GM12878 (cell line): ENCODE measurements at regions of chr10 and their contacts with region 1.

Region 1: DNA sequence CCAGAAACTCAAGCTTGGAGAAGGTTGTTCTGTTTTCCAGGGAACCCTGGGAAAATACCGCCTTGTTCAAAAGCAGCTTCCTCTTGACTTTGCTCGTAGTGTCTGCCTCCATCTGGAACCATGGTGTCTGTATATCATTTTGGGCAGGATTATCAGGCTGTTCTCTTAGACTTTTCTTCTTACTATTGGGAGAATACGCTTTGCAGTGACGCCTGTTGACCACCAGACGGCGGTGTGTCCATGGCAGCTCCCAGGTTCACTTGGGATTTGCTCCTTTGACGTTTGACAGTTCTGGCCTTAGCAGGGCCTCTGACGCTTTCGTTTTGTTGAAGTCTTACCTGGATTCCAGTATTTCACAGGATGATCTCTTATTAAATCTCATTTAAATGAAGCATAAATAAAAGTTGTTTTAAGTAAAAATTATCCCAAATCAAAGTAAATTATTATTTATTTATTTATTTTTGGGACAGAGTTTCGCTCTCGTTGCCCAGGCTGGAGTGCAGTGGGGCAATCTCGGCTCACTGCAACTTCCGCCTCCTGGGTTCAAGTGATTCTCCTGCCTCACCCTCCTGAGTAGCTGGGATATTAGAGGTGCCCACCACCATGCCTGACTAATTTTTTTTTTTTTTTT is 41.8 kb upstream of the GJD4 start:
- DNase-seq: peak; percentile 15
- ATAC-seq: peak; percentile 84
- H3K4me3 ChIP-seq: no peak overlapping the region
- H3K27ac ChIP-seq: no peak overlapping the region
- H3K4me1 ChIP-seq: peaks cover 8% of the 10 kb centered on the region
- H3K27me3 ChIP-seq: no peaks in the 10 kb centered on the region
- CTCF ChIP-seq: peak; percentile 90 to 100 (median 100)
- EP300 ChIP-seq: no peak
- POLR2A ChIP-seq: no peak
- RAD21 ChIP-seq: peak; percentile 71

Region 2: DNA sequence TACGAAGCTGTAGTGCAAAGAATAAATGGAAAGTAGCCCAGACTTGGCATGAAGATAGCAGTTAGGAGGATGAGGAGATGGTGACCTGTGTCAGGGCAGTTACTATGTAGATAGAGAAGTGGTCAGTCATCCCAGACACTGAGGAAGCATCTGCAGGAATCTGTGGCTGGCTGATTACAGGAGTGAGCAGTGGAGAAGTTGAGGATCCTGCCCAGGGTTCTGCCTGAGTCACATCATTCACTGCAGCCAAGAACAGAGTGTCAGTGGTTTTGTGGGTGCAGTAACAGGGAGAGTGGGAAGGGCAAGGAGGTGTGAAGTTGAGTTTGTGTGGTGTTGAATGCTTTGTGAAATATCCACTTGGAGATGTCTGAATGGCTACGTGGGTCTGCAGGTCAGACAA is 1552.5 kb before region 1 on chr10:
- CTCF ChIA-PET with region 1: no interaction called
- POLR2A ChIA-PET with region 1: no interaction called
- RAD21 ChIA-PET with region 1: no interaction called
- SMC1A ChIA-PET with region 1: no interaction called
- in situ Hi-C with region 1: no loop called
- intact Hi-C with region 1: no loop called
- DNase-seq: no peak
- ATAC-seq: no peak
- H3K4me3 ChIP-seq: no peak overlapping the region
- H3K27ac ChIP-seq: no peak overlapping the region
- H3K4me1 ChIP-seq: no peaks in the 10 kb centered on the region
- H3K27me3 ChIP-seq: no peaks in the 10 kb centered on the region
- CTCF ChIP-seq: no peak
- EP300 ChIP-seq: no peak
- POLR2A ChIP-seq: no peak
- RAD21 ChIP-seq: no peak

Region 3: GRCh38 chr10:35236739-35237138 is 326.6 kb before region 1 on chr10:
- CTCF ChIA-PET with region 1: interaction called, 13 read pairs
- POLR2A ChIA-PET with region 1: no interaction called
- RAD21 ChIA-PET with region 1: interaction called, 9 read pairs
- SMC1A ChIA-PET with region 1: interaction called, 7 read pairs
- in situ Hi-C with region 1: no loop called
- intact Hi-C with region 1: loop called (anchors 2 kb)
- DNase-seq: no peak
- ATAC-seq: no peak
- H3K4me3 ChIP-seq: no peak overlapping the region
- H3K27ac ChIP-seq: no peak overlapping the region
- H3K4me1 ChIP-seq: no peaks in the 10 kb centered on the region
- H3K27me3 ChIP-seq: no peaks in the 10 kb centered on the region
- CTCF ChIP-seq: peak in 2 of 3 experiments; percentile 15 to 28; a peak in 2 of 6 replicates
- EP300 ChIP-seq: no peak
- POLR2A ChIP-seq: no peak
- RAD21 ChIP-seq: peak; percentile 46

Region 4: GRCh38 chr10:35257057-35257983 is 306.1 kb before region 1 on chr10:
- CTCF ChIA-PET with region 1: no interaction called
- POLR2A ChIA-PET with region 1: no interaction called
- RAD21 ChIA-PET with region 1: no interaction called
- SMC1A ChIA-PET with region 1: no interaction called
- in situ Hi-C with region 1: no loop called
- intact Hi-C with region 1: no loop called
- DNase-seq: no peak
- ATAC-seq: no peak
- H3K4me3 ChIP-seq: no peak overlapping the region
- H3K27ac ChIP-seq: no peak overlapping the region
- H3K4me1 ChIP-seq: no peaks in the 10 kb centered on the region
- H3K27me3 ChIP-seq: no peaks in the 10 kb centered on the region
- CTCF ChIP-seq: no peak
- EP300 ChIP-seq: no peak
- POLR2A ChIP-seq: no peak
- RAD21 ChIP-seq: no peak

Region 5: DNA sequence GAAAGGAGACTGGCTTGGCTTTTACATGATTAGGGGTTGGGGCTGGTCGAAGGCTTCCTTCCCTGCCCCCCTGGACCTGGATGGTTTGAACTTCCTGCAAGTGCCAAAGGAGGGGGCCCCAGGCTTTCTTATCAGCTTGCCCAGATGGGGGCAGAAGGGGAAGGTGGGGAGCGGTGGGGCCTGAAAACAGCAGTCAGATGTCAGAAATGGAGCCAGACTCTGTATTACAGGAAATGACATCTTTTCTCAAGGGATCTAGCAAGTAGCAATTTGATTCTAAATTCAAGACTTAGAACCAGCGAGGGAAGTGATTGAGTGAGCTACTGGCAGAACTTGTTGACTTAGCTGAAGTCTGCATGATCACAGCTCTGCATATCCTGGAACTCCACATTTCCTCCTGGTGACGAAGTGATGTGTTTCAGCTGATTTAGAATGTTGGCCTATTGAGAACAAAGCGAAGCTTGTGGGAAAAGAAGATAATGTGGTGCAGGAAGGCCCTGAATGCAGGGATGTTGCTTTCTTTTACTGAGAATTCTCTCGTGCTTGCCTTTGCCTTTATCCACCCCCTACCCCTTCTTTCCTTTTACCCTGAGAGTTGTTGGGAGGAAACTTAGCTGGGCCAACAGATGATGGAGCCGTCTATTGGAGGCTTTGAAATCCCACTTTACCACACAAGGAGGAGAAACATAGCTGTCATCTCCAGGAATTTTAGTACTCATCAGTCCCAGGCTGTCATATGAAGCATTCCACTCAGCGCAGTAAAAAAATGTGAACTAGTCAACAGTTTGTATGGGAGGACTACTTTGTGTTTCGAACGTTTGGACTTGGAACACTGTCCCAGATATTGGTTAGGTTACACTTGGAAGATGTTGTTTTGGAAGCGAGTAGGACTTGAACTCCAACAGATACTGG is 183.9 kb before region 1 on chr10:
- CTCF ChIA-PET with region 1: interaction called, 24 read pairs
- POLR2A ChIA-PET with region 1: no interaction called
- RAD21 ChIA-PET with region 1: interaction called, 12 read pairs
- SMC1A ChIA-PET with region 1: interaction called, 21 read pairs
- in situ Hi-C with region 1: no loop called
- intact Hi-C with region 1: loop called (anchors 5 kb)
- DNase-seq: peak; percentile 60
- ATAC-seq: peak; percentile 90
- H3K4me3 ChIP-seq: peak overlapping the region; percentile 46; the same call in 1 of the 2 replicates
- H3K27ac ChIP-seq: peak overlapping the region; percentile 67
- H3K4me1 ChIP-seq: peaks cover 20% of the 10 kb centered on the region
- H3K27me3 ChIP-seq: no peaks in the 10 kb centered on the region
- CTCF ChIP-seq: peak; percentile 30 to 45 (median 41); a peak in 4 of 6 replicates
- EP300 ChIP-seq: 0 out of 4 replicates have a peak, but pooled peaks of 1 of the 2 experiments have one; percentile 11
- POLR2A ChIP-seq: no peak
- RAD21 ChIP-seq: peak; percentile 89

Region 6: DNA sequence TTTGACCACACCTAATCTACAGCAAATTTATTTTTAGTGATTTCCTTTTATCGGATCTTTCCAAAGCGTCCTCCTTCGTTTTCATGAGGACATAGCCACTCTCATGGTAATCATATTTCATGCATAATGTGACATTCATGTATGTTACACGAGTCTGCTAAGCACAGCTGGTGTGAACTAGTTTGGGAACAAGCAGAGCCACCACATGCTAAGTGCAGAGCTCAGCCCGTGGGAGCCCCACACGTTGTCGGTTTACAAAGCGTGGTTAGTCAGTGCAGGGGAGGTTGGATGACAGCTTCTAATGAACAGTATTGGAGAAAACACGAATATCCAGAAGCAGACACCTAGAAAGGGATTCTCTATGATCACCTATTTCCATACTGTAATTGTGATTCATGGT is 36.6 kb before region 1 on chr10:
- CTCF ChIA-PET with region 1: interaction called, 12 read pairs
- POLR2A ChIA-PET with region 1: no interaction called
- RAD21 ChIA-PET with region 1: no interaction called
- SMC1A ChIA-PET with region 1: interaction called, 3 read pairs
- in situ Hi-C with region 1: no loop called
- intact Hi-C with region 1: no loop called
- DNase-seq: no peak
- ATAC-seq: no peak
- H3K4me3 ChIP-seq: no peak overlapping the region
- H3K27ac ChIP-seq: no peak overlapping the region
- H3K4me1 ChIP-seq: no peaks in the 10 kb centered on the region
- H3K27me3 ChIP-seq: no peaks in the 10 kb centered on the region
- CTCF ChIP-seq: no peak
- EP300 ChIP-seq: no peak
- POLR2A ChIP-seq: no peak
- RAD21 ChIP-seq: no peak

Region 7: GRCh38 chr10:35552621-35553342 is 10.6 kb before region 1 on chr10:
- CTCF ChIA-PET with region 1: interaction called, 22 read pairs
- POLR2A ChIA-PET with region 1: no interaction called
- RAD21 ChIA-PET with region 1: no interaction called
- SMC1A ChIA-PET with region 1: interaction called, 5 read pairs
- in situ Hi-C with region 1: no loop called
- intact Hi-C with region 1: no loop called
- DNase-seq: no peak
- ATAC-seq: no peak
- H3K4me3 ChIP-seq: no peak overlapping the region
- H3K27ac ChIP-seq: no peak overlapping the region
- H3K4me1 ChIP-seq: peaks cover 7% of the 10 kb centered on the region
- H3K27me3 ChIP-seq: no peaks in the 10 kb centered on the region
- CTCF ChIP-seq: no peak
- EP300 ChIP-seq: no peak
- POLR2A ChIP-seq: no peak
- RAD21 ChIP-seq: no peak

Region 8: GRCh38 chr10:35574924-35575352 is 11.6 kb after region 1 on chr10:
- CTCF ChIA-PET with region 1: interaction called, 35 read pairs
- POLR2A ChIA-PET with region 1: no interaction called
- RAD21 ChIA-PET with region 1: no interaction called
- SMC1A ChIA-PET with region 1: interaction called, 4 read pairs
- in situ Hi-C with region 1: no loop called
- intact Hi-C with region 1: no loop called
- DNase-seq: no peak
- ATAC-seq: no peak
- H3K4me3 ChIP-seq: no peak overlapping the region
- H3K27ac ChIP-seq: no peak overlapping the region
- H3K4me1 ChIP-seq: no peaks in the 10 kb centered on the region
- H3K27me3 ChIP-seq: no peaks in the 10 kb centered on the region
- CTCF ChIP-seq: no peak
- EP300 ChIP-seq: no peak
- POLR2A ChIP-seq: no peak
- RAD21 ChIP-seq: no peak

Region 9: DNA sequence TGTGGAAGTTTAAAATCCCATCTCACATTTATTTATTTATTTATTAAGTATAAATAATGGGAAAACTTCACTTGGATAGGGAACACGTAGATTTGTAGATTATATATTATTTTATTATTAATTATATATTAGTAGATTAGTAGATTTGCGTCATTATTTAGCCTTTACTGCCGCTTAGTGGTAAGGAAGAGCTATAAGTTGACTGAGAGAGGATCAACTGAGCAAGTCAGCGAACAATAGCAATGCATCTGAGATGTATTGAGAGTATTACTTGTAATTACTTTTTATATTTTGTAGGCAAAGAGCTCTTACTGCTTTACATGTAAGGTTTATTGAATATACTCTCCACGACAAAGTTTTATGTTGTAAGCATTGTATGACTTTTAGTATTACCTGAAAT is 1317.5 kb after region 1 on chr10:
- CTCF ChIA-PET with region 1: interaction called, 10 read pairs
- POLR2A ChIA-PET with region 1: no interaction called
- RAD21 ChIA-PET with region 1: no interaction called
- SMC1A ChIA-PET with region 1: interaction called, 6 read pairs
- in situ Hi-C with region 1: no loop called
- intact Hi-C with region 1: loop called (anchors 5 kb)
- DNase-seq: no peak
- ATAC-seq: 0 out of 3 replicates have a peak, but pooled peaks have one; percentile 48
- H3K4me3 ChIP-seq: no peak overlapping the region
- H3K27ac ChIP-seq: no peak overlapping the region
- H3K4me1 ChIP-seq: no peaks in the 10 kb centered on the region
- H3K27me3 ChIP-seq: no peaks in the 10 kb centered on the region
- CTCF ChIP-seq: peak; percentile 39 to 54 (median 45); a peak in 5 of 6 replicates
- EP300 ChIP-seq: no peak
- POLR2A ChIP-seq: no peak
- RAD21 ChIP-seq: peak; percentile 64